ENCODE measurements at regions of chr4 and their contacts with region 1.

Region 1: DNA sequence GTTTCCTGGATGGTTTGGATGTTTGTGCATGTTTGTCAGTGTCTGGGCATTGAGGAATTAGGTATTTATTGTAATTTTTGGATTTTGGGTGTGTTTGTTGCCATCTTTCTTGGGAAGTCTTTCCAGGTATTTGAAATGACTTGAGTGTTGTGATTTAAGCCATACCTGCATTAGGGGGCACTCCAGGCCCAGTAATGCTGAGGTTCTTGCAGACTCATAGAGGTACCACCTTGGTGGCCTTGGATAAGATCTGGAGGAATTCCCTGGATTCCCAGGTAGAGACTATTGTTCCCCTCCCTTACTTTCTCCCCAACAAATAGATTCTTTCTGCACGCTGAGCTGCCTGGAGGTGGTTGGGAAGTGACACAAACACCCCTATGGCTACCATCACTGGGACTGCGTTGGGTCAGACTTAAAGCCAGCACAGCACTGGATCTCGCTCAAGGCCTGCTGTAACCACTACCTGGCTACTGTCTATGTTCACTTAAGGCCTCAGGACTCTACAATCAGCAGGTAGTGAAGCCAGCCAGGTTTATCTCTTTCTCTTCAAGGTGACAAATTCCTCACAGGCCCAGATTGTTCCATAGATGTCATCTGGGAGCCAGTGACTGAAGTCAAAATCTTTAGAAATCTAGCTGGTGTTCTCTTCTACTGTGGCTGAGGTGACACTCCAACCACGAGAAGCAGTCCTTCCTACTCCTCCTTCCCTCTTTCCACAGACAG is 643.6 kb downstream of the PDHA2 start:
- DNase-seq: peak; percentile 2
- H3K4me3 ChIP-seq: no peak overlapping the region
- H3K27ac ChIP-seq: no peak overlapping the region
- H3K4me1 ChIP-seq: no peaks in the 10 kb centered on the region
- H3K27me3 ChIP-seq: no peaks in the 10 kb centered on the region
- CTCF ChIP-seq: no peak
- POLR2A ChIP-seq: no peak

Region 2: GRCh38 chr4:97153042-97153441 is 669.6 kb after region 1 on chr4:
- CTCF ChIA-PET with region 1: interaction called, 13 read pairs
- POLR2A ChIA-PET with region 1: no interaction called
- dilution Hi-C with region 1: no loop called
- intact Hi-C with region 1: loop called (anchors 1 kb)
- DNase-seq: peak; percentile 36
- H3K4me3 ChIP-seq: no peak overlapping the region
- H3K27ac ChIP-seq: no peak overlapping the region
- H3K4me1 ChIP-seq: no peaks in the 10 kb centered on the region
- H3K27me3 ChIP-seq: no peaks in the 10 kb centered on the region
- CTCF ChIP-seq: peak; percentile 9 to 36
- POLR2A ChIP-seq: no peak

Measured in endothelial cell of umbilical vein (primary cell).